Psoas muscle (tissue), 8 donors: ENCODE measurements at regions of chr7 and their contacts with region 1.

Region 1: DNA sequence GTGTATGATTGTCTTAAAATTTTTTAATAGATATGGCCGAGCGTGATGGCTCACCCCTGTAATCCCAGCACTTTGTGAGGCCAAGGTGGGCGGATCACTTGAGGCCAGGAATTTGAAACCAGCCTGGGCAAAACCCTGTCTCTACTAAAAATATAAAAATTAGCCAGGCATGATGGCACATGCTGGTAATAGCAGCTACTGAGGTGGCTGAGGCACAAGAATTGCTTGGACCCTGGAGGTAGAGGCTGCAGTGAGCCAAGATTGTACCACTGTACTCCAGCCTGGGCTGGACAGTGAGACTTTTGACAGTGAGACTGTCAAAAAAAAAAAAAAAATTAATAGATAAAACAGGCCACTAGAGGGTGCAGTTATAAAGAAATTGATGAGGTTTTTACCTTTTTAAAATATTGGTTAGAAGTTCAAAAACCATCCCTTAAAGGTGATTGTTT is 20.5 kb downstream of the NOM1 start:
- DNase-seq: no peak
- ATAC-seq: peak; percentile 60 to 94 (median 82)
- H3K4me3 ChIP-seq: no peak overlapping the region
- H3K27ac ChIP-seq: peak overlapping the region; percentile 79
- H3K4me1 ChIP-seq: peaks cover 23% of the 10 kb centered on the region
- H3K27me3 ChIP-seq: no peaks in the 10 kb centered on the region
- CTCF ChIP-seq: peak; percentile 48

Region 2: DNA sequence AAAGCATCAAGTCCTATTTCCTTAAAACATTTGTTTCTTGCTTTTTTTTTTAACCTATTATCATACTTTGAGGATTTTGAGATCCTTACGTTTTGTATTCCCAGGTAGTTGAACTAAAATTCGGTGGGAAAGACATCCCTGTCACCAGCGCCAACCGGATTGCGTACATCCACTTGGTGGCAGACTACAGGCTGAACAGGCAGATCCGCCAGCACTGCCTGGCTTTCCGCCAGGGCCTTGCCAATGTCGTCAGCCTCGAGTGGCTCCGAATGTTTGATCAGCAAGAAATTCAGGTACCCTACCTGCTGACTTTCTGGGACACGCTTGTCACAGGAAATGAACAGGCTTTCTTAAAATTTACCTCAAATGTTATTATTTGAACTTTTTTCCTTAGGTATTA is 283.9 kb after region 1 on chr7:
- intact Hi-C with region 1: no loop called
- DNase-seq: peak; percentile 70 to 85
- ATAC-seq: peak; percentile 65 to 87 (median 73)
- H3K4me3 ChIP-seq: no peak overlapping the region
- H3K27ac ChIP-seq: no peak overlapping the region
- H3K4me1 ChIP-seq: no peaks in the 10 kb centered on the region
- H3K27me3 ChIP-seq: no peaks in the 10 kb centered on the region
- CTCF ChIP-seq: peak; percentile 25

Region 3: GRCh38 chr7:157336383-157337315 is 366.7 kb after region 1 on chr7 and contains the start of gene DNAJB6:
- intact Hi-C with region 1: loop called in 1 of 2 experiments (anchors 5 kb)
- DNase-seq: peak; percentile 93 to 97
- ATAC-seq: peak; percentile 84 to 92 (median 87)
- H3K4me3 ChIP-seq: peak within 1 kb of the TSS; percentile 71
- H3K27ac ChIP-seq: peak within 1 kb of the TSS; percentile 94
- H3K4me1 ChIP-seq: peaks cover 27% of the 10 kb centered on the region
- H3K27me3 ChIP-seq: no peaks in the 10 kb centered on the region
- CTCF ChIP-seq: no peak
- total RNA-seq, gene DNAJB6: 226 to 243 (median 232) TPM